ENCODE measurements at regions of chr11 and their contacts with region 1.

Region 1: DNA sequence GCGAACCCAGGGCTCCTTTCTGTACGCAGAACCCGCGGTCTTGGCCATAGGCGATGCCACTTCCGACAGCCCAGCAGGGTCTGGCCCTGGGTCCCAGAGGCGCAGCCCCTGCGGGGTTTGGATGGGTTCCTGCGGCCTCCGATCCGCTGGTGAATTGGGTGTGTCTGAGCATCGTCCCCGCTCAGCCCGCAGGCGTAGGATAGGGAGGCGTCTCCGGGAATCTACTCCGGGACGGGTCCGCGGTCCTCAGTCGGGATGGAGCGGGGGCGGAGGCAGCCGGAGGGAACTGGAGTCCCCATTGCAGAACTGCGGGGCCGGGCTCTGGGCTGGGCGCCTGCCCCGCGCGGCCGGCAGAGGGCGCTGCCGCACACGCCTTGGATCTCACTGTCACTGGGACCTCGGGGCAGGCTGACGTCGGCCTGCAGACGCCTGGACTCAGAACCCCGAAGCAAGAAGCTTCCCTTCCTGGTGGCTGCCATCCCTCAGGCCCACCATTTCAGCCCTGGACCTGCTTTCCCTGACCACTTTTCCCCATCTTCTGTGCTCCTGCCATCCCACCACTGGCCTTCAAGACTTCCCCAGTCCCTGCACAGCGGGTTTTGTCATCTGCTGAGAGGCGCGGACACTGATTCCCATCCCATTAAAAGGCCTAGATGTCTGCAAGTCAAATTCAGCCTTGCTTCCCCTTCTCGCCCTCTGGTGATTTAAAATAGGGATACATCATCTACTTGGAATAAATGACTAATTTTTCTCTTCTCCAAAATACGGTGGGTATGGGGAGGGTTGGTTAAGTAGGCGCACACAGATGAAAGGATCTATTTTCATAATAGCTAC is 38.3 kb upstream of the CREB3L1 start:
- DNase-seq: peak; percentile 85
- ATAC-seq: peak; percentile 82
- H3K4me3 Mint-ChIP-seq: peak overlapping the region; percentile 65
- H3K27ac Mint-ChIP-seq: no peak overlapping the region
- H3K4me1 Mint-ChIP-seq: peaks cover 46% of the 10 kb centered on the region
- H3K27me3 Mint-ChIP-seq: peaks cover 34% of the 10 kb centered on the region

Region 2: GRCh38 chr11:46249103-46249937 is 10.1 kb after region 1 on chr11:
- CTCF ChIA-PET with region 1: interaction called, 11 read pairs
- POLR2A ChIA-PET with region 1: no interaction called
- DNase-seq: no peak
- ATAC-seq: no peak
- H3K4me3 Mint-ChIP-seq: no peak overlapping the region
- H3K27ac Mint-ChIP-seq: no peak overlapping the region
- H3K4me1 Mint-ChIP-seq: peaks cover under 1% of the 10 kb centered on the region
- H3K27me3 Mint-ChIP-seq: no peaks in the 10 kb centered on the region

Region 3: DNA sequence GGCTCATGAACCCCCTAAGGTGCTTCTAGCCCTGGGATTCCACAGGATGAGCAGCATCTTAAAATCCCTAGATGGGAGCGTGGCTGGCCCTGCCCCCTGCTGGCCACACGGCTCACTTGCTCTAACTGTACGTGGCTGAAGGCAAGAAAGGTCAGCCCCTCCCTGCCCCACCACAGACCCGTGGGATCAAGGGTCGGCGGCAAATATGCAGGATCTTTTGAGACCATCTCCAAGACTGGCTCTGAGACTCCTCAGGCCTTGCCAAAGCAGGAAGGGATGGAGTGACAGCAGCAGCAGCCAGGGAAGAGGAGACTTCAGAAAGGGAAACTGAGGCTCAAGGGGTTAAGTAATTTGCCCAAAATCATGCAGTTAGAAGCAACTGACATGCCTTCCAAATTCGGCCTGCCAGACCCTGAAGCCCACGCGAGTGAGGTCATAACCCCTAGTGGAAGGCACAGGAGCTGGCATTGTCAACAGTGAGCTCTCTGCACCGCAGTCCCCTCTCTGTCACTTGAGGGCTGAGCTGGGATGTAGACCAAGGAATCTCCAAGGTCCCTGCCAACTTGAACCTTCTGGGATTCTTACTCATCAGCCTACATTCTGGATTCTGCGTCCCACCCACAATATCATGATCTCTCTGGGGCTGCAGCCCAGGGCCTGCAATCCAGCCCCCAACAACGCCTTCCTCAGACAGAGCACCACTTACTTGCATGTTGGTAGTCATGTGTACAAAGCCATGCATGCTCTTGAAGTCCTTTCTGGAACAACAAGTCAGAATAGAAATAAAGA is 69.6 kb after region 1 on chr11:
- CTCF ChIA-PET with region 1: interaction called, 366 read pairs
- POLR2A ChIA-PET with region 1: no interaction called
- DNase-seq: peak; percentile 75
- ATAC-seq: peak; percentile 78
- H3K4me3 Mint-ChIP-seq: no peak overlapping the region
- H3K27ac Mint-ChIP-seq: no peak overlapping the region
- H3K4me1 Mint-ChIP-seq: peaks cover 16% of the 10 kb centered on the region
- H3K27me3 Mint-ChIP-seq: peaks cover 3% of the 10 kb centered on the region

Region 4: DNA sequence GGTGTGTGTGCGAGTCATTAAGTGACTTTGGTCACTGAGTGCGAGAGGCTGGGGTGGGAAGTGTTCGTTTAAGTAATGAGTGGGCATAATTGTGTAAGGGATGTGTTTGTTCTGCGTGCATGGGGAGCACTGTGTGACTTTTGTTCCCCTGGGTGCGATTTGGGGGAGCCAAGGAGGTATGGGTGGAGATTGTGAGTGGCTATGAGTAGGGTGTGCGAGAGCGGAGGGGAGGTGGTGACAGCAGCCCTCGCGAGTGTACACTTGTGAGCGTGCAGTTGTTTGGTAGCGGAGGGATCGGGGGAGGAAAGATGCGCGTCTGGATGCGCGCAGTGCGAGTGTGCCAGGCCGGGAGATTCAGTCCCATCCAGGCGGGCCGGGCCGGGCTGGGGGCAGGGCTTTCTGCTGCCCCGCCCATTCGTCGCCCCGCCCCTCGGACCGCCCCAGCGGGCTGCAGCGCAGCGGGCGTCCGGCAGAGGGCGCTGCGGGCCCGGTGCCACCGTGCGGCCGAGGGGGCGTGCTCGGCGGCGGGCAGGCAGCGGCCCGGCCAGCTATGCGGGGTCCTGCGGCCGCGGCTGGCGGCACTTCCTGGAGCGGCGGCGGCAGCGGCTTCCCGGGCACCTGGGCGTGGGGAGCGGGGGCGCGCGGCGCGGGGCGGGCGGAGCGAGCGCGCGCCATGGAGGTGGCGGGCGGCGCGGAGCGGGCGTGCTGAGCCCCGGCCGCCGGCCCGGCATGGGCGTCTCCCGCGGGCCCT is 107.9 kb after region 1 on chr11 and contains the start of gene DGKZ:
- CTCF ChIA-PET with region 1: interaction called, 24 read pairs
- POLR2A ChIA-PET with region 1: interaction called, 3 read pairs
- DNase-seq: peak; percentile 88
- ATAC-seq: peak; percentile 73
- H3K4me3 Mint-ChIP-seq: peak within 1 kb of the TSS; percentile 82
- H3K27ac Mint-ChIP-seq: peak within 1 kb of the TSS; percentile 92
- H3K4me1 Mint-ChIP-seq: peaks cover 75% of the 10 kb centered on the region
- H3K27me3 Mint-ChIP-seq: peaks cover 7% of the 10 kb centered on the region
- total RNA-seq, gene DGKZ: 151 to 152 TPM

Region 5: DNA sequence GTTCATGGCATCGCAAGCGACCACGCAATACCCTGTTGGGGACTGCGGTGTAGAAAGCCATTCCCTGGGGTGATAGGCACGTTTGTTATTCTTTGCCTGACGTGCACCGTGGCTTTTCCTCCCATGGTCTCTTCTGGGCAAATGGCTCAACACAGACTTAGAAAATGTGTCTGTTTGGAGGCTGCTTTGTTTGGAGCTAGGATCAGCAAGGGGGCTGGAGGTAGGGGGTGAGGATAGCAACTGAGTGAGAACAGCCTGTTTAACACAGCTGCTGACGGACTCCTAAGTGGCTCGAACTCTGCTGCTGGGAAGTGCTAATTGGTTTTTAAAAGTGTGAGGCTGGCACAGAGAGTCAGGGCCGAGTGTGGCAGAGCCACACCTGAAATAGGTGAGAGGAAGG is 168.5 kb after region 1 on chr11:
- CTCF ChIA-PET with region 1: no interaction called
- POLR2A ChIA-PET with region 1: no interaction called
- DNase-seq: no peak
- ATAC-seq: no peak
- H3K4me3 Mint-ChIP-seq: no peak overlapping the region
- H3K27ac Mint-ChIP-seq: no peak overlapping the region
- H3K4me1 Mint-ChIP-seq: no peaks in the 10 kb centered on the region
- H3K27me3 Mint-ChIP-seq: no peaks in the 10 kb centered on the region